ENCODE measurements at regions of chr12 and their contacts with region 1.

Region 1: DNA sequence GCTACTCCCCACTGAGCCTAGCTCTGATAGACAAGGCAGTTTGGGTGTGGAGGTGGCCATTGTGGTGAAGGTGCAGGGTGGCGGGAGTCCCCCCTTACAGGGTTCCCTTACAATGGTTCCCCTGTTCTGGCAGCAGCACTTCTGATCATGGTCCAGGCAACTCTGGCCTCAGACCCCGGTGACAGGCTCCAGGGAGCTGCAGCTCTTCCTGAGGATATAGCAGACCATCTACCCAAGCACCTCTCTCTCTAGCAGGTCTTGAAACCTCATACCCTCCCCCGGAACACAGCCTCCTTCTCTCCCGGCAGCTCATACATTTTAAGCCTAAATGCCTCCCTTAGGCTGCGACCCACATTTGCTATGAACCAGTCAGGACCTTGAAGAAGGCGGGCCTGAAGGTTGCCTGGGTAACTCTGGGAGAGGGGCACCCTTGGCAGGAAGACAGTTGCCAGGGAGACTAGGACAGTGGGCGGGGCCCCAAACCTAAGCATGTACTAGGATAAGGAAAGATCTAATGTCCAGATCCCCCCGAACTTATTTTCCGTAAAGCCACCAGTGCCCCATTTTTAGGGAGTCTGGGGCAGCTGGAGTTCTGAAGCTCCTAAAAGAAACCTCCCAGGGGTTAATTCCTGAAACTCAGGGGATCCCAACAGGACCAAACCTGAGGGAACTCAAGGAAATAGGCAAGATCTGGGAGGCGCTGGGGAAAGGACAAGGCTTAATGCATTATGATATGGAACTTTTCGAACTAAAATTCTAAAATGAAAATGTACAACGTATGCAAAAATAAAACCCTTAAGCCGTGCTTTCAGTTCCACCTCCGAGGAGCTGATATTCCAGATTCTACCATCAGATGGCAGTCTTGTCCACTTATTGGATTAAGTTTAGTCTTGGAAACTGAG is 4.5 kb upstream of the GDF11 start:
- DNase-seq: peak; percentile 47 to 92 (median 67)
- ATAC-seq: peak; percentile 74 to 78 (median 76)
- H3K4me3 ChIP-seq: peak overlapping the region; percentile 51 to 70
- H3K4me3 Mint-ChIP-seq: peak overlapping the region; percentile 79 to 85 (median 85)
- H3K27ac ChIP-seq: peak overlapping the region; percentile 50
- H3K27ac Mint-ChIP-seq: peak overlapping the region; percentile 92 to 97
- H3K4me1 ChIP-seq: peaks cover 6 to 29% of the 10 kb centered on the region in 2 experiments
- H3K4me1 Mint-ChIP-seq: peaks cover 22 to 33% (median 31%) of the 10 kb centered on the region in 3 donors
- H3K27me3 ChIP-seq: no peaks in the 10 kb centered on the region
- H3K27me3 Mint-ChIP-seq: no peaks in the 10 kb centered on the region

Region 2: GRCh38 chr12:55607821-55608594 is 130.4 kb before region 1 on chr12:
- CTCF ChIA-PET with region 1: no interaction called
- POLR2A ChIA-PET with region 1: no interaction called
- DNase-seq: no peak
- ATAC-seq: no peak
- H3K4me3 ChIP-seq: no peak overlapping the region
- H3K4me3 Mint-ChIP-seq: no peak overlapping the region
- H3K27ac ChIP-seq: no peak overlapping the region
- H3K27ac Mint-ChIP-seq: no peak overlapping the region
- H3K4me1 ChIP-seq: no peaks in the 10 kb centered on the region
- H3K4me1 Mint-ChIP-seq: no peaks in the 10 kb centered on the region
- H3K27me3 ChIP-seq: peaks cover 0 to 7% of the 10 kb centered on the region in 2 experiments
- H3K27me3 Mint-ChIP-seq: peaks cover 23 to 48% of the 10 kb centered on the region in 2 donors

Region 3: GRCh38 chr12:55757701-55758100 is 19.3 kb after region 1 on chr12:
- CTCF ChIA-PET with region 1: interaction called in 1 of 2 experiments, 5 read pairs
- POLR2A ChIA-PET with region 1: interaction called in 1 of 2 experiments, 13 read pairs
- DNase-seq: no peak
- ATAC-seq: no peak
- H3K4me3 ChIP-seq: no peak overlapping the region
- H3K4me3 Mint-ChIP-seq: no peak overlapping the region
- H3K27ac ChIP-seq: no peak overlapping the region
- H3K27ac Mint-ChIP-seq: peak overlapping the region in 1 of 2 donors; percentile 50
- H3K4me1 ChIP-seq: no peaks in the 10 kb centered on the region
- H3K4me1 Mint-ChIP-seq: peaks cover 0 to 14% (median 3%) of the 10 kb centered on the region in 3 donors
- H3K27me3 ChIP-seq: no peaks in the 10 kb centered on the region
- H3K27me3 Mint-ChIP-seq: no peaks in the 10 kb centered on the region

Region 4: DNA sequence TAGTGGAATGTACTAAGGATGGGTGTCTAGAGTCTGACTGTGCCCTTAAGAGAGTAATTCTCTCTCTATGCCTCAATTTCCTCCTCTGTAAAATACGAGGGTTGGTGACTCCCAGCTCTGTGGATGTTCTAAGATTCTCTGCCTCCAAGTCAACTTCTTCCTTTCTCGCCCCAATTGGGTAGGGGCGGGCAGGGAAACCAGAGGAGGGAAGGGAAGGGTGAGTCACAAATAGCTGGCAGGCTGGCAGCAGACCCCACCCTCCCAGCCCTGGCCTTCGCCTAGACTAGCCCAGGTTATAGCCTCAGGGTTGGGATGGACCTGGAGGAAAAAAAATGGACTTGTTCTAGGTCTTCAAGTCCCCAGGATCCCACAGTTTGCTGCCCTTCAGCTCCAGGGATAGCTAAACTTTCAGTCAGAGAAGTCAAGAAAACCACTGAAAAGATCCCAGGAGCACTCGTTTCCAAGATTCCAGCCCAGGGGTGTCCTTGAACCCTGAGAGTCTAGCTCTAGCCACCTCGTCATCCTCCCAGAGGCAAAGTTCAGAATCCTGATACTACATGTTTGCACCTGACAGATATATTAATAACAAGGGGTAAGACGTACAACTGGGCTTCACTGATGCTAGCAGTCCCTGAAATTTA is 194.9 kb after region 1 on chr12:
- CTCF ChIA-PET with region 1: interaction called in 1 of 2 experiments, 47 read pairs
- POLR2A ChIA-PET with region 1: no interaction called
- DNase-seq: peak in 2 of 35 experiments; percentile 35 to 36
- ATAC-seq: no peak
- H3K4me3 ChIP-seq: peak overlapping the region; percentile 88 to 93
- H3K4me3 Mint-ChIP-seq: peak overlapping the region; percentile 96 to 100 (median 97)
- H3K27ac ChIP-seq: peak overlapping the region; percentile 73
- H3K27ac Mint-ChIP-seq: peak overlapping the region; percentile 96 to 99
- H3K4me1 ChIP-seq: peaks cover 48 to 75% of the 10 kb centered on the region in 2 experiments
- H3K4me1 Mint-ChIP-seq: peaks cover 64 to 81% (median 78%) of the 10 kb centered on the region in 3 donors
- H3K27me3 ChIP-seq: no peaks in the 10 kb centered on the region
- H3K27me3 Mint-ChIP-seq: no peaks in the 10 kb centered on the region

Region 5: GRCh38 chr12:55973598-55974307 is 235.4 kb after region 1 on chr12 and contains the start of gene RAB5B:
- CTCF ChIA-PET with region 1: interaction called in 1 of 2 experiments, 12 read pairs
- POLR2A ChIA-PET with region 1: interaction called in 1 of 2 experiments, 3 read pairs
- DNase-seq: peak; percentile 92 to 100 (median 99)
- ATAC-seq: peak; percentile 91 to 93 (median 92)
- H3K4me3 ChIP-seq: peak within 1 kb of the TSS; percentile 69 to 89
- H3K4me3 Mint-ChIP-seq: no peak within 1 kb of the TSS
- H3K27ac ChIP-seq: peak within 1 kb of the TSS; percentile 70
- H3K27ac Mint-ChIP-seq: no peak within 1 kb of the TSS
- H3K4me1 ChIP-seq: peaks cover 18 to 21% of the 10 kb centered on the region in 2 experiments
- H3K4me1 Mint-ChIP-seq: peaks cover 22 to 27% (median 24%) of the 10 kb centered on the region in 3 donors
- H3K27me3 ChIP-seq: no peaks in the 10 kb centered on the region
- H3K27me3 Mint-ChIP-seq: no peaks in the 10 kb centered on the region
- total RNA-seq, gene RAB5B: 58.6 to 99.8 (median 85.7) TPM

Region 6: GRCh38 chr12:56636675-56637540 is 898.5 kb after region 1 on chr12:
- CTCF ChIA-PET with region 1: no interaction called
- POLR2A ChIA-PET with region 1: interaction called in 1 of 2 experiments, 12 read pairs
- DNase-seq: peak; percentile 73 to 99 (median 97)
- ATAC-seq: peak; percentile 62 to 79 (median 65)
- H3K4me3 ChIP-seq: peak overlapping the region; percentile 83 to 92
- H3K4me3 Mint-ChIP-seq: peak overlapping the region; percentile 89 to 100 (median 96)
- H3K27ac ChIP-seq: peak overlapping the region; percentile 90
- H3K27ac Mint-ChIP-seq: peak overlapping the region; percentile 94 to 98
- H3K4me1 ChIP-seq: peaks cover 32 to 55% of the 10 kb centered on the region in 2 experiments
- H3K4me1 Mint-ChIP-seq: peaks cover 48 to 55% (median 53%) of the 10 kb centered on the region in 3 donors
- H3K27me3 ChIP-seq: no peaks in the 10 kb centered on the region
- H3K27me3 Mint-ChIP-seq: no peaks in the 10 kb centered on the region